ENCODE measurements at regions of chr3 and their contacts with region 1.

Region 1: DNA sequence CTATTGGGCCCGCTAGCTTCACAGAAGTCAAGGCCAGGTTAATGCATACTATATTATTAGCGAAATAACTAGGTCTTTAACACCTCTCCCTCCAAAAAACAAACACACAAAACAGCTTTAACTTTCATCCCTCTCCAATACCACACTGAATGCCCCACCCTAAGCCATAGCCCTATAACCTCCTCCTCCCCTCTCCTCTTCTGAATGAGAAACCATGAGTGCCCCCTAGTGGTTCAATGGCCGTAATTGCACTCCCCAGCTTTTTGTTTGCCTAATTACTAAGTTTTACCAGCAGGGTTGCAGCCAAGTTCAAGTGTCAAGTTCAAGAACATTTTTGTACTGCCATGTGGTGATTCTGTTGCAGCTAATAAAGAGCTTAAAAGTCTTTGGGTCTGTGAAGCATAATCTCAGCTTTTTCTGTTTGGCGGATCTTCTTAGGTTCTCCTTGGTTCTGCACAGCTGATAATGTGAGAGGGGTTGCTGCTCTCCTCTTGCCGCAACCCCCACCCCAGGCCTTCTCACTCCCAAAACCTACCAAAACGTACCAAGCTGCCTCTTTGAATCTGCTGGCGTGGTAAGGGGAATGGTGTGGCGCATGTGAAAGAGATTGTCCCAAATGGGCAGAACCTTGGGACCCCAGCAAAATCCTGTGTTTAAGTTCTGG is 57.9 kb downstream of the RPL22L1 start:
- DNase-seq: peak; percentile 86
- H3K4me3 ChIP-seq: no peak overlapping the region
- H3K27ac ChIP-seq: peak overlapping the region; percentile 51
- H3K4me1 ChIP-seq: peaks cover 35% of the 10 kb centered on the region
- H3K27me3 ChIP-seq: no peaks in the 10 kb centered on the region
- CTCF ChIP-seq: peak; percentile 80 to 92
- POLR2A ChIP-seq: no peak

Region 2: DNA sequence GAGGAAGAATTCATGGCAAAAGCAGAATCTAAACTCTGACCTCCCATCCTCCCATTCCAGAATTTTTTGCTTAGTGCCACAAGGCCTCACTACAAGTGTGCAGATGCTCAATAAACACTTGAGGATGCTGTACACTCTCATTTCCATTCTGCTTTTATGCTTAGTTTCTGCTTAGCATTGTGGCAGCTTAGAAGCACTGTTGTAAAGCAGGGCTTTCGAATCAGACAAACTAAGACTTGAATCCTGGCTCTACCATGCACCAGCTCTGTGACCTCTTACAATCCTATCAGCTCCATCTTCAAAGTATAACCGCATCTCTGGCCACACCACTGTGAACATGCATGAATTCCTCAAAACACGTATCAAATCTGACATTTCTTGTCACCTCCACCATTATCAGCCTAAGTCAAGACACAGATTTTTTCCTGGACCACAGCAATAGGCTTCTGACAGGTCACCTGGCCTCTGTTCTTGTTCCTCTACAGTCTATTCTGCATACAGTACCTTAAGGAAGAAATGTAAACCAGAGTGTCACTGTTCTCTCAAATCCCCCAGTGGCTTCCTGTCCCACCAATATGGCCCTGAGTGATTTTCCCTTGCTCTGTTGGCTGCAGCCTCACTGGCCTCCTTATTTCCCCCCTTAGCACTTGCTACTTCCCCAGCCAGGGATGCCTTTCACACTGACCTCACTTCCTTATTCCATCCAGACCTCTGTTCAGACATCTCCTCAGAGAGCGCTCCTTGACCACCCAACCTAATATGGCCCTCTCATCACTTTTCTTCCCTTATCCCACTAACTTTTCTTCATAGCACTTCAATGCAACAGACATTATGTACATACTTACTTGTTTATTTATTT is 622.4 kb before region 1 on chr3:
- CTCF ChIA-PET with region 1: interaction called, 3 read pairs
- POLR2A ChIA-PET with region 1: no interaction called
- dilution Hi-C with region 1: no loop called
- intact Hi-C with region 1: loop called (anchors 5 kb)
- DNase-seq: no peak
- H3K4me3 ChIP-seq: no peak overlapping the region
- H3K27ac ChIP-seq: no peak overlapping the region
- H3K4me1 ChIP-seq: no peaks in the 10 kb centered on the region
- H3K27me3 ChIP-seq: peaks cover 0 to 6% of the 10 kb centered on the region in 2 experiments
- CTCF ChIP-seq: no peak
- POLR2A ChIP-seq: no peak

Region 3: GRCh38 chr3:170429050-170429449 is 383.0 kb before region 1 on chr3:
- CTCF ChIA-PET with region 1: interaction called, 25 read pairs
- POLR2A ChIA-PET with region 1: no interaction called
- dilution Hi-C with region 1: no loop called
- intact Hi-C with region 1: no loop called
- DNase-seq: peak; percentile 16
- H3K4me3 ChIP-seq: no peak overlapping the region
- H3K27ac ChIP-seq: no peak overlapping the region
- H3K4me1 ChIP-seq: peaks cover 31% of the 10 kb centered on the region
- H3K27me3 ChIP-seq: no peaks in the 10 kb centered on the region
- CTCF ChIP-seq: no peak
- POLR2A ChIP-seq: no peak

Region 4: DNA sequence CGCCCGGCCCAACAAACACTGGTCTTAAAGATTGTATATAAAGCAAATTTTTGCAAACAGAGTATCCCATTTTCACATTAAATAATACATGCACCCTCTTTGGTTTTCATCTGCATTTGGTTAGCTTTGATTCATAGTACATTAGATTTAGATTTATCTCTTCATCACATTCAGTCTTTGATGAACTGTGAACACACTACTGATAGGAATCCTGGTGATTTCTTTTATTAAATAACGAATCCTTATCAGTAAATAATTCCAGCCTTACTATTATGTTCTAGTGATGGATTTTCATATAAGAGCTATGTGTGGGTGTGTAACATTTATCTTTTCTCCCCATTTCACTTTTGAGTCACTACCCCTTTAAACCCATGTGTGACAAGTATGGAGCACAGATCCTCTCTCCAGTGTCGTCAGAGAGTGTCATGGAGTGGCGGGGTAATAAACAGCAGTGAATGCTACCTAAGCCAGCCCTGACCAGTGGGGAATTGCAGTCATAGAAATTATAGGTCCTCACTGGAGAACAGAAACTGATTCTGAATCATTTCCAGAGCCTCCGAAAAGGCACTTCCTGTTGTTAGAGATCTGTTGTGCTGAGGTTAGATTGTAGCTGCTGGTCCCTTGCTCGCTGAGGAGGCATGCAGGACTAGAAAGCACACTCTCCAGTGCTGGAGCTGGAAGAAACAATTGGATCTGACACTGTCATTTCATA is 248.2 kb before region 1 on chr3:
- CTCF ChIA-PET with region 1: interaction called, 7 read pairs
- POLR2A ChIA-PET with region 1: no interaction called
- dilution Hi-C with region 1: no loop called
- intact Hi-C with region 1: loop called (anchors 5 kb)
- DNase-seq: peak; percentile 86
- H3K4me3 ChIP-seq: no peak overlapping the region
- H3K27ac ChIP-seq: peak overlapping the region; percentile 0
- H3K4me1 ChIP-seq: peaks cover 12% of the 10 kb centered on the region
- H3K27me3 ChIP-seq: no peaks in the 10 kb centered on the region
- CTCF ChIP-seq: no peak
- POLR2A ChIP-seq: no peak

Region 5: DNA sequence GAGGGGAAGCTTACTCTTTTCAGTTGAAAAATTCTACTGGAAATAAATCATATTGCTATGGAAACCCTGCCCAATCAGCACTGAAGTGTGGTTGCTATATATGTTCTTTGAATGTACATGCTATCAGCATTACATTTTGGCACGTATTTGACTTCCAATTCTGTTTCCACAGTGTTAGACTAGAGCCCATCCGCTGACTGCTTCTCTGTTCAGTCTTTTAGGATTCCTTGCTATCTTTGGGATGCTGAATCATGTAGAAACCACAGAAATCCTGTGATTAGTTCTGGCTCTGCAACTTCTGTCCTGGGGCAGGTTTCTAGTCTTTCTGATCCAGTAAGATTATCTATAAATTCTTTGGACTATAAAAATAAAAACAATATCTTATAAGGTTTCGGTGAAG is 97.9 kb before region 1 on chr3:
- CTCF ChIA-PET with region 1: interaction called, 10 read pairs
- POLR2A ChIA-PET with region 1: no interaction called
- dilution Hi-C with region 1: no loop called
- intact Hi-C with region 1: no loop called
- DNase-seq: no peak
- H3K4me3 ChIP-seq: no peak overlapping the region
- H3K27ac ChIP-seq: no peak overlapping the region
- H3K4me1 ChIP-seq: peaks cover 7% of the 10 kb centered on the region
- H3K27me3 ChIP-seq: no peaks in the 10 kb centered on the region
- CTCF ChIP-seq: no peak
- POLR2A ChIP-seq: no peak

Region 6: DNA sequence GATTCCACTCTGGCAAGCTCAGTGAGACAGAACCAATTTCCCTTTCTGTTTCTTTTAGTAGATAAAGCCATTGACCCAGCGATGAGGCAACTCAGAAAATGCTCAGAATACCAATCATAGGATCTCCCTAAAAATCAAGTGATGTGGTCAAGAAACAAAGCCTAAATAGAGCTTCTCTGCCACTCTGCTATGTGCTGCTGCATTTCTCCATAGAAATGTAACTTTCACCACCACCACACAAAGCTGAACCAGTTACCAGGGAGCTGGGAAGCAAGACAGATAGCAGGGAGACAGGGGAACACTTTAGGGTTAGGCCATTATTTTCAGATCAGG is 51.9 kb before region 1 on chr3:
- CTCF ChIA-PET with region 1: interaction called, 37 read pairs
- POLR2A ChIA-PET with region 1: no interaction called
- dilution Hi-C with region 1: no loop called
- intact Hi-C with region 1: no loop called
- DNase-seq: no peak
- H3K4me3 ChIP-seq: no peak overlapping the region
- H3K27ac ChIP-seq: no peak overlapping the region
- H3K4me1 ChIP-seq: peaks cover 20% of the 10 kb centered on the region
- H3K27me3 ChIP-seq: no peaks in the 10 kb centered on the region
- CTCF ChIP-seq: no peak
- POLR2A ChIP-seq: no peak

Region 7: DNA sequence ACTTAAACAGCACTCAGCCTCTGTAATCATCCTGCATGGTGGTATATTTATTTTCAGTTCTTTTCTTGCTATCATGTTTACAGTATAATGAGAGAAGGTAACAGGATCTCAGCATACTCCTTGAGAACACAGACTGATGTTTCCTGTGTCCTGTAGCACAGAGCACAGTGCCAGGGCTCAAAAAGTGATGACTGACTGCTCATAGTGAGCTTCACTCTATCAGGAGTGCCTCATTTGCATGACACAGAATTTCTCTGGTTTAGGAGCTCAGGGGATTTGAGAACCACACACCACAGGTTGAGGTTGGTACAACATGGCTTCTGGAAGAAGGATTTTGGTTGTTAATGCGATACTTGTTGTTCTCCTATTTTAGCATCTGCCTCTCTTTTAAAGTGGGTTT is 283.0 kb after region 1 on chr3:
- CTCF ChIA-PET with region 1: no interaction called
- POLR2A ChIA-PET with region 1: no interaction called
- dilution Hi-C with region 1: no loop called
- intact Hi-C with region 1: no loop called
- DNase-seq: peak; percentile 23
- H3K4me3 ChIP-seq: no peak overlapping the region
- H3K27ac ChIP-seq: no peak overlapping the region
- H3K4me1 ChIP-seq: peaks cover under 1% of the 10 kb centered on the region
- H3K27me3 ChIP-seq: no peaks in the 10 kb centered on the region
- CTCF ChIP-seq: no peak
- POLR2A ChIP-seq: no peak

Measured in endothelial cell of umbilical vein (primary cell).